ENCODE measurements at regions of chr7 and their contacts with region 1.

Region 1: GRCh38 chr7:4797858-4798705 is 22.7 kb downstream of the AP5Z1 start:
- DNase-seq: no peak
- H3K4me3 ChIP-seq: no peak overlapping the region
- H3K27ac ChIP-seq: no peak overlapping the region
- H3K4me1 ChIP-seq: no peaks in the 10 kb centered on the region
- H3K27me3 ChIP-seq: no peaks in the 10 kb centered on the region
- CTCF ChIP-seq: peak; percentile 26 to 68 (median 58)
- POLR2A ChIP-seq: no peak

Region 2: DNA sequence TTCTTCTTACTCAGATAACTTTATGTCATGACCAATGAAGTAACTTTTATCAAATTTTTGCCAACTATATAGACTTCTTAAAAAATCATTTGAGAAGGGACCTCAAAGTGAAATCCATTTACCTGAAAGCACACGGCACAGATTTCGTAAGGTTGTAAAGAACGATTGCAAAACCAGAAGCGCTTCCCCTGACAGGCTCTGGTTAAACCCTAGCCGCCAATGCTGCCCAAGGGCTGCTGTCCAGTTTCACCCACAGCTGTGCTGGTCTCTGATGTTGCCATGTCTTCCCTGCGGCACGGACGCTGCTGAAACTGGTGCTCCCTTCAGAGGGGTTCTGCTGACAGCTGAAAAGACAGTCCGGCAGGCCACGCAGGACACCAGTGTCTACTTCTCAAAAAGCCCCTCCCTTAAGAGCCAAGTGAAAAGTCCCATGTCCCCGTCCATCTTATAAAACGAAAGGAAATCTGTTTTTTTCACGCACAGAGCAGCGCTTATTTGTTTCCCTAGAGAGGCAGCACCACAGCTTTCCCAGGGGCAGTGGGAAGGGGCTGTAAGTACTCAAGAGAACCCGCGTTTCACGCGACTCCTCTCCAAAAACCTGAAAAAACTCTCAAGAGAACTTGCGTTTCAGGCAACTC is 1986.5 kb before region 1 on chr7:
- intact Hi-C with region 1: no loop called
- DNase-seq: no peak
- H3K4me3 ChIP-seq: no peak overlapping the region
- H3K27ac ChIP-seq: peak overlapping the region in 1 of 2 donors; percentile 54
- H3K4me1 ChIP-seq: no peaks in the 10 kb centered on the region
- H3K27me3 ChIP-seq: no peaks in the 10 kb centered on the region
- CTCF ChIP-seq: no peak
- POLR2A ChIP-seq: no peak

Region 3: GRCh38 chr7:4883374-4884144 is 85.5 kb after region 1 on chr7 and contains the start of gene RADIL:
- intact Hi-C with region 1: loop called (anchors 5 kb)
- DNase-seq: peak; percentile 79
- H3K4me3 ChIP-seq: peak within 1 kb of the TSS; percentile 39 to 50
- H3K27ac ChIP-seq: peak within 1 kb of the TSS; percentile 57 to 59
- H3K4me1 ChIP-seq: no peaks in the 10 kb centered on the region
- H3K27me3 ChIP-seq: no peaks in the 10 kb centered on the region
- CTCF ChIP-seq: peak; percentile 44 to 79 (median 65)
- POLR2A ChIP-seq: no peak
- total RNA-seq, gene RADIL: 1.8 to 12.0 TPM

Region 4: DNA sequence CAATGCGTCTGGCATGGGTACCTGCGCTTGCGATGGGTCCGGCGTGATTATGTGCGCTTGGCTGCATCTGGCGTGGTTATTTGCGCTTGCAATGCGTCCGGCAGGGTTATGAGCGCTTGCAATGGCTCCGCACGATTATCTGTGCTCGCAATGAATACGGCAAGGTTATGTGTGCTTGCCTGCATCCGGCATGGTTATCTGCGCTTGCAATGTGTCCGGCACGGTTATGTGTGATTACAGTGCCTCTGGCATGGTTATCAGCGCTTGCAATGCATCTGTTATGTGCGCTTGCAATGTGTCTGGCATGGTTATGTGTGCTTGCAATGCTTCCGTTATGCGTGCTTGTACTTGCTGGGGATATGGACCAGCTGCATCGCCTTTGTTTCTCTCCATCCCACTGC is 285.2 kb after region 1 on chr7:
- intact Hi-C with region 1: loop called (anchors 2 kb)
- DNase-seq: no peak
- H3K4me3 ChIP-seq: no peak overlapping the region
- H3K27ac ChIP-seq: no peak overlapping the region
- H3K4me1 ChIP-seq: no peaks in the 10 kb centered on the region
- H3K27me3 ChIP-seq: no peaks in the 10 kb centered on the region
- CTCF ChIP-seq: no peak
- POLR2A ChIP-seq: no peak